ENCODE measurements at regions of chr14 and their contacts with region 1.

Region 1: DNA sequence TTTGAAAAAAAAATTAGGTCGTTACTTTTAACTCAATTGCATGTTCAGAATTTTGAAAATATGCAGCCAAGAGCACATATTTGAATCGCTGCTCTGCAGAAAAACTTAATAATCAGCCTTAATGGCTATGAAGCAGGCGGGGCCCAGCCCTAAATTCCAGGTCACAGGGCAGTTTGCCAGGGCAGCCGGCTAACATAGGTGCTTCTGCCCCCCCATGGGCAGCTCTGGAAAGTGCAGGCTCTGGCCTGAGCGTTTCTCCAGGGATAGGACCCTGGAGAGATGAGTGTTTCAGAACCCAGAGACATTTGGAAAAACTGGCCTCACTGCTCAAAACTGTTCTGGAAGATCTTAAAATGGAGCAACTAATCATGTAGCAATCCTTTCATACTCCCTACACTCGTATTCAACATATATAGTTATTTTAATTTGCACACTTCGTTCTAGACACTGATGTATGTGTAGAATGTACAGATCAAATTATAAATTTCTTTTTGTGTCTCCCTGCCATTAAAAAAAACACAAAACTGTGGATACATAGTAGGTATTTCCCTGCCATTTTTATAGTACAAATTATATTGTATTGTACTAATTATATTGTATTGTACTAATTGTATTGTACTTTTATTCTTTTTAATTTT is 26.0 kb upstream of the PTGR2 start:
- DNase-seq: peak; percentile 38
- ATAC-seq: peak; percentile 92
- H3K4me3 ChIP-seq: no peak overlapping the region
- H3K27ac ChIP-seq: peak overlapping the region; percentile 54
- H3K4me1 ChIP-seq: peaks cover 28% of the 10 kb centered on the region
- H3K27me3 ChIP-seq: no peaks in the 10 kb centered on the region
- CTCF ChIP-seq: peak; percentile 89

Region 2: GRCh38 chr14:73728717-73729330 is 96.8 kb before region 1 on chr14:
- CTCF ChIA-PET with region 1: interaction called, 3 read pairs
- POLR2A ChIA-PET with region 1: interaction called, 16 read pairs
- in situ Hi-C with region 1: no loop called
- intact Hi-C with region 1: no loop called
- DNase-seq: peak; percentile 71
- ATAC-seq: peak; percentile 84
- H3K4me3 ChIP-seq: no peak overlapping the region
- H3K27ac ChIP-seq: peak overlapping the region; percentile 66
- H3K4me1 ChIP-seq: peaks cover 70% of the 10 kb centered on the region
- H3K27me3 ChIP-seq: no peaks in the 10 kb centered on the region
- CTCF ChIP-seq: peak; percentile 85

Region 3: GRCh38 chr14:73753959-73754882 is 71.4 kb before region 1 on chr14:
- CTCF ChIA-PET with region 1: interaction called, 3 read pairs
- POLR2A ChIA-PET with region 1: interaction called, 13 read pairs
- in situ Hi-C with region 1: no loop called
- intact Hi-C with region 1: no loop called
- DNase-seq: no peak
- ATAC-seq: peak; percentile 13
- H3K4me3 ChIP-seq: peak overlapping the region; percentile 16 to 85; a peak in 3 of 4 replicates
- H3K27ac ChIP-seq: peak overlapping the region; percentile 97
- H3K4me1 ChIP-seq: peaks cover 86% of the 10 kb centered on the region
- H3K27me3 ChIP-seq: no peaks in the 10 kb centered on the region
- CTCF ChIP-seq: no peak

Region 4: DNA sequence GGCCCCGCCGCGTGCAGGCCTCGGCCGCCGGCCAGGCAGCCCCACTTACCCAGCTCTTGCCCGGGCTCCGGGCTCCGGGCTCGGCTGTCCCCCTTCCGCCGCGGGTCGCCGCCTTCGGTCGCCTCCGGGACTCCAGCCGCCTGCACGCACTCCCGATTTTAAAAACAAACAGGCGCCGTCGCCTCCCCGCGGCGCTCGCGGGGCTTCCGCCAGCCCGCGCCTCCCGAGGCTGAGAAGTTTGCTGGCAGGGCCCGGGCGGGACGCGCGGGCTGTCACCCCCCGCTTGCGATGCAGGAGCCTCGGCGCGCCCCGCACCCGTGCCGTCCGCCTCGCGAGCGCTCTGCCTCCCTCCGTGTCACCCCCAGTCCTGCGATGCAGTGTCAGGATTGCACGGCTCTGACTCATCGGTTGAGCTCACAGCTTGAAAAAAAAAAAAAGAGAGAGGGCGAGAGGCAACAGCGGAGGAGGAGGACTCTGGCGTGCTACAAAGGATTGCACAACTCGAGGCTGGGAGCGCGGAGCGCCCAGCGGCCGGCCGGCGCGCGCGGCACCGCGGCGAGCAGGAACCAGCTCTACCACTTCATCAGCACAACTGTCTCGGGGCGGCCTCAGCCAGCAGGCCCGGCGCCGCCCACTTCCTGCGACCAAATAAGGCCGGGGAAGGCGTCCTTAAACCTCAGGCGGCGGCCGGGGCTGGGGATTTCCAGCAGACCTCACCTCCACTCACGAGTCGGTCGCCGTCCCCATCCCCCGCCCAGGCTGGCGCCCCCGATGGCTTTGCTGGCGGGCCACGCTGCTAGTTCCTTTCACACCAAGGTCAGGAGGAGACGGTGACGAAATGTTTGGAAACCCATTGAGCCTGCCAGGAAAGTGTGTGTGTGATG is 65.7 kb before region 1 on chr14:
- CTCF ChIA-PET with region 1: interaction called, 5 read pairs
- POLR2A ChIA-PET with region 1: interaction called, 13 read pairs
- in situ Hi-C with region 1: no loop called
- intact Hi-C with region 1: loop called (anchors 10 kb)
- DNase-seq: peak; percentile 83
- ATAC-seq: peak; percentile 79
- H3K4me3 ChIP-seq: peak overlapping the region; percentile 63 to 68
- H3K27ac ChIP-seq: peak overlapping the region; percentile 98
- H3K4me1 ChIP-seq: peaks cover 71% of the 10 kb centered on the region
- H3K27me3 ChIP-seq: no peaks in the 10 kb centered on the region
- CTCF ChIP-seq: no peak

Region 5: DNA sequence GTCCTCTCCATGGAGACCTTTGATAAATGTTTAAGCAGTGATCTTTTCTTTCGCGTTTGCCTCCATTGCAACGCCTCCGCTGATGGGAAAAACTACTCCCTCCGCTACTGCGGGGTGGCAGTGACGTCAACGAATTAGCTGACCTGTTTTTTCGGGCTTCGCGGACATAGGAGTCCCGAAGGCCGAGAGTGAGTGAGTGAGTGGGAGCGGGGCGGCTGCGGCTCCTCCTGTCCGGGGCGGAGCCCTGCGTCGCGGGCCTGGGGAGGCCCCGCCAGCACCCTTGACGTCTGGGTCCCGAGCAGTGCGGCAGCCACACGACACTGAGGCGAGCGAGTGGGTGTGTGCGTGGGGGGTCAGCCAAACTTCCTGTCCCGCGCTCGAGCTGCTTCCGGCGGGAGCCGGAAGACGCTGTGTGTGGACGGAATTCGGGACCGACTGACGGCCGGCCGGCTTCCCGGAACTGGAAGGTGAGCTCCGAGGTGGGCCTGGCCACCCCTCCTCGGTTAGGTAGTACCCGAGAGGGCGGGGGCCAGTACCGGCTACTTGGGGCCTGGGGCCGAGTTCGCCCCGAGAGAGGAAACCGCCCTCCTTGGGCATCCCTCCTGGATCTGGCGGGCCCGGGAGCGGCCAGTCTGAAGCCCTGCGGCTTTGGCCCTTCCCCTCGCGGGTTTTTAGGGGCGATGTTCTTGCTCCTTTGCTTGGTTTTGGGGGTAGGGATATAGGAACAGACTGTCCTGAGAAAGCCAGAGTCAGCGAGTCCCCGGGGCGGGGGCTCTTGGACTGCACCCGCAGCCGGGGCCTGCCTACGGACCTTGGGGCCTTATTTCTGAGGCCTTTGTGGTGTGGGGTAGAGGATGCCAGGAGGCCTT is 61.0 kb after region 1 on chr14 and contains the start of gene ZNF410:
- CTCF ChIA-PET with region 1: no interaction called
- POLR2A ChIA-PET with region 1: no interaction called
- in situ Hi-C with region 1: no loop called
- intact Hi-C with region 1: no loop called
- DNase-seq: peak; percentile 67
- ATAC-seq: peak; percentile 98
- H3K4me3 ChIP-seq: peak within 1 kb of the TSS; percentile 86 to 88
- H3K27ac ChIP-seq: peak within 1 kb of the TSS; percentile 95
- H3K4me1 ChIP-seq: peaks cover 13% of the 10 kb centered on the region; the same call in 1 of the 2 replicates
- H3K27me3 ChIP-seq: no peaks in the 10 kb centered on the region
- CTCF ChIP-seq: no peak
- total RNA-seq, gene ZNF410: 31.2 TPM

Measured in Panc1 (cell line).